Mammary epithelial cell (primary cell): ENCODE measurements at regions of chr1 and their contacts with region 1.

Region 1: DNA sequence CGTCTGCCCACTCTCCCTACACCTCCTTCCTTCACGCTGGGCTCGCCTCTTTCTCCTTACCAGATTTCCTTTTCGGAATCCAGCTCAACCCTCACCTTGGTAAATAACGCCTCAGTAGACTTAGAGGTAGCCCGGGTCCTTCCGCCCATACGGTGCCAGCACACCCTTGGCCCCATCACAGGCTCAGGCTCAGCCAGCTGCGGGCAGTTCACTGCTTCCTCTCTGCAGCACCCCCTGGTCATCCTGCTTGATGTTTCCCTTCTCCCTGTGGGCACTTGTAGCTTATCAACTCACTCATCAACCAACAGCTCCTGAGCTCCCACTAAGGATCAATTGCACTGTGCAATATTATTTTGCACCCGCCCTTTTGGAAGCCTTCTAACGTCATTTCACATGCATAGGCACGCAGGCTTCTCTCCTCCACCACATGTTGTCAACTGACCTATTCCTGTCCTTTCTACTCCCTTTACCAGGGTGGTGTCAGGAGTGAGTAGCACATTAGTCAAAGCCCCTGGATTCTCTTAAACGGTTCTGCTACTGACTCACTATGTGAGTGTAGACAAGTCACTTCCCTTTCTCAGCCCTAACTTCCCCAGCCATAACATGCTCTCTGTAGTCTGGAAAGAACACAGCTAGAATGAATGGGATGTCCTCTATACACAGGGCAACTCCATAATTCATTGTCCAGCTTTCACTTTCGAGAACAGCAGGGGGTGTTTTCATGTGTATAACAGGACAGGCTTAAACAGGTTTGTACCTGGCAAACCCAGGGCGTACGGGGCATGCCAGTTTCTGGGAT is 47.1 kb upstream of the IRF2BP2 start:
- DNase-seq: peak; percentile 100
- H3K4me3 ChIP-seq: peak overlapping the region; percentile 51 to 70 (median 61)
- H3K27ac ChIP-seq: peak overlapping the region; percentile 99
- H3K4me1 ChIP-seq: peaks cover 47% of the 10 kb centered on the region
- H3K27me3 ChIP-seq: no peaks in the 10 kb centered on the region
- CTCF ChIP-seq: peak in 1 of 2 donors; percentile 21

Region 2: DNA sequence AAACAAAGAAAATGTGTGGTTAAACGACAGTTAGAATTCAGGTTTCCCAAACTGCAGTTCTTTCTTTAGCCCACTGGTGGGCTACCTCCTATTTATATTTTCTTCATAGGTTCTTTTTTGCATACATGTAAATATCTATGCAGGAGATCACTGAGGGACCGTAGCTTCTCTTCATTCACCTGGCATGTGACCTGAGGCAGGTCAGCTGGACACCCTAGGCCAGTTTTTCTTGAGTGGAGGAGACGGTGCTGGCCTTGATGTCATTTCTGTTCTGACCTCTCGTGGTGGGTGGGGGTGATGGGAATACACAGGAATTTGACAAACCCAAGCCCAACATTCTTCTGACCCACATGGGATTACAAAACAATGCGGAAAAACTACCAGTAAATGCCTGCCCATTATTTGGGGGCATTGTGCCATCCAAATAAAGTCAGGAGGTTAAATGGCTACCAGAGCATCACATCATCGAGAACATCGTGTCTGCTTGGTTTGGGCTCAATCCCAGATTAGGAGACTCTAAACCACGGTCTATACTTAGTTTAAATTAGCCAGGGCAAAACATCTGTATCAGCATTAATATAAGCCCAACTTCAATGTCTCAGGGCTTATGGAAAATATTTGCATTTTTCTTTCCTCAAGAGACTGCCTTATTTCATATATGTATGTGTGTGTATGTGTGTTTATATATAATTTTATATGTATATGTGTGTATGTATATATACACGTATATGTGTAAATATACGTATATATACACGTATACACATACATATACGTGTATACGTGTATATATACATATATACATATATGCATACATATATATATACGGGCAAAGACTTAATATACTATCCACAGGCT is 39.7 kb before region 1 on chr1:
- CTCF ChIA-PET with region 1: no interaction called
- dilution Hi-C with region 1: loop called (anchors 5 kb)
- in situ Hi-C with region 1: loop called (anchors 5 kb)
- intact Hi-C with region 1: loop called (anchors 1 kb)
- DNase-seq: peak; percentile 33
- H3K4me3 ChIP-seq: no peak overlapping the region
- H3K27ac ChIP-seq: peak overlapping the region; percentile 95
- H3K4me1 ChIP-seq: peaks cover 76% of the 10 kb centered on the region
- H3K27me3 ChIP-seq: no peaks in the 10 kb centered on the region
- CTCF ChIP-seq: peak; percentile 17 to 18

Region 3: DNA sequence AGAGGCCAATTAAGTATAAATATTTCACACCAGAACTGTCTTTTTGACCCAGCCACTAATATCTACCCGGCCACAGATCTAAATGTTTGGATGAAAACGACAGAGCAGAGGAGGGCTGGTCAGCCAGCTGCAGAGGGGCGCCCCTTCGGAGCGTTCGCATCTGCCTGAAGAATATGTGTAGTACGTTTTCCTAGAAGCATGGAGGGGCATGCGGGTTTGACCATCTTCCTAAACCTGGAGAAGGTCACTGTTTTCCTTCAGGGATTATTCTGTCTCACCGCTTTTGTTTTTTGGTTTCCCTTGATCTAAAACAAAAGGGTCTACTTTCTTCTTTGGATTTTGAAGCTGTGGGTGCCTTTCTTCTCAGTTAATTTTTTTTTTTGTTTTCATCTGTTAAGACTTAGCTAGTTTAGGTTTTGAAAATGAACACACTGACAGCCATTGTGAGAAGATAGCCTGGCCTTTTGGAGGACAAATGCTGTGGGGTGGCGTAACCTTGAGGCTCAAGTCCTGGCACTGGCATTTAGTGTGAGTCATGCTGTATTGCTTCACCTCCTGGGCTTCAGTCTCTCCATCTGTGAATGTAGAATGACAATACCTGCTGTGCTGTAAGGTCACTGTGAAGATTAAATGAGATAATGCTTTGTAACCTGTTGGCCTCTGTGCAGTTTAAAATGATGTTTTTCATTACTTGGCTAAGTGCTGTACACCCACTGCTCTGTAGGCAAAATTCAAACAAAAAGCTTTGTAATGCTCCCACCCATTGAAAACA is 27.0 kb after region 1 on chr1:
- CTCF ChIA-PET with region 1: no interaction called
- dilution Hi-C with region 1: no loop called
- in situ Hi-C with region 1: no loop called
- intact Hi-C with region 1: loop called (anchors 2 kb)
- DNase-seq: peak; percentile 85
- H3K4me3 ChIP-seq: no peak overlapping the region
- H3K27ac ChIP-seq: no peak overlapping the region
- H3K4me1 ChIP-seq: peaks cover 11% of the 10 kb centered on the region
- H3K27me3 ChIP-seq: no peaks in the 10 kb centered on the region
- CTCF ChIP-seq: no peak

Region 4: GRCh38 chr1:234755449-234755863 is 98.4 kb after region 1 on chr1:
- CTCF ChIA-PET with region 1: no interaction called
- dilution Hi-C with region 1: no loop called
- in situ Hi-C with region 1: no loop called
- intact Hi-C with region 1: no loop called
- DNase-seq: no peak
- H3K4me3 ChIP-seq: no peak overlapping the region
- H3K27ac ChIP-seq: no peak overlapping the region
- H3K4me1 ChIP-seq: no peaks in the 10 kb centered on the region
- H3K27me3 ChIP-seq: no peaks in the 10 kb centered on the region
- CTCF ChIP-seq: no peak

Region 5: DNA sequence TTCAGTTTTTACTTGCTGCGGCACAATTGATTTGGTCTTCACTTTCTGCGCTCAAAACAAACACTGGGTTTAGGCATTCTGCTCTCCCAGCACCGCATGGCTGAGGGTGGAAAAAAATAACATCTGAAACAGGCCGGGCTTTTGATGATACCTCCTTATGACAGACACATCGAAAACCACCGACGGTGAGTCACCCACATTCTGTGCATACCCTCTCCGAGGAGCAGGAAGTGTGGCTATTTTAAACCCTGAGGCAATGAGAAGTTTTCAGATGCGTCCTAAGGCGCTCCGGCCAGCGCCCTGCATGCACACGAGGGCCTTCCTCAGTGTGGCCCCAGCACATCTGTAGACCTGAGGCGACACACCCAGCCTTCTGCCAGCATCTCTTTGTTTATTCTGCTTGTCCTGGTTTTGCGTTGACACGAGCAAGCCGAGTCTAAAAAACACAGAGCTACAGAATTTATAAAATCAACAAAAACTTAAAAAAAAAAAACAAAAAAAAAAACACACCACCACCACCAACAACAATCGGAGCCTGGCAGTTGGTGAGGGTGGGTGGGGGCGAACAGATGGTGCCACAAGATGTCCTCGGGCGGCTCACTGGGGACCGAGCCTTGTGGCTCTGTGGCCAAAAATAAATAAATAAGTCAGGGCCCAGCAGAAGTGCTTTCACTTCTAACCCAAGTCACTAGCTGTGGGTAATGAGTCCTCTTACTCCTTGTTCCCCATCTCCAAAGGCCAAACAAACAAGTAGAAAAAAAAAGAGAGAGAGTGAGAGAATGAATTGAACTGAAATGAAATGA is 115.5 kb after region 1 on chr1:
- CTCF ChIA-PET with region 1: no interaction called
- dilution Hi-C with region 1: no loop called
- in situ Hi-C with region 1: no loop called
- intact Hi-C with region 1: loop called (anchors 2 kb)
- DNase-seq: peak; percentile 98
- H3K4me3 ChIP-seq: no peak overlapping the region
- H3K27ac ChIP-seq: peak overlapping the region; percentile 62
- H3K4me1 ChIP-seq: peaks cover 13% of the 10 kb centered on the region
- H3K27me3 ChIP-seq: peaks cover 11% of the 10 kb centered on the region
- CTCF ChIP-seq: no peak

Region 6: GRCh38 chr1:234997201-234997895 is 340.3 kb after region 1 on chr1:
- CTCF ChIA-PET with region 1: no interaction called
- dilution Hi-C with region 1: no loop called
- in situ Hi-C with region 1: loop called in 1 of 2 experiments (anchors 5 kb)
- intact Hi-C with region 1: loop called (anchors 1 kb)
- DNase-seq: peak; percentile 100
- H3K4me3 ChIP-seq: peak overlapping the region in 1 of 3 experiments; percentile 8
- H3K27ac ChIP-seq: peak overlapping the region; percentile 98
- H3K4me1 ChIP-seq: peaks cover 27% of the 10 kb centered on the region
- H3K27me3 ChIP-seq: no peaks in the 10 kb centered on the region
- CTCF ChIP-seq: peak in 1 of 2 donors; percentile 7

Region 7: GRCh38 chr1:235067263-235068172 is 410.5 kb after region 1 on chr1:
- CTCF ChIA-PET with region 1: no interaction called
- dilution Hi-C with region 1: no loop called
- in situ Hi-C with region 1: no loop called
- intact Hi-C with region 1: loop called (anchors 1 kb)
- DNase-seq: peak; percentile 100
- H3K4me3 ChIP-seq: no peak overlapping the region
- H3K27ac ChIP-seq: peak overlapping the region; percentile 97
- H3K4me1 ChIP-seq: peaks cover 43% of the 10 kb centered on the region
- H3K27me3 ChIP-seq: no peaks in the 10 kb centered on the region
- CTCF ChIP-seq: peak in 1 of 2 donors; percentile 1